ENCODE measurements at regions of chr13 and their contacts with region 1.

Region 1: DNA sequence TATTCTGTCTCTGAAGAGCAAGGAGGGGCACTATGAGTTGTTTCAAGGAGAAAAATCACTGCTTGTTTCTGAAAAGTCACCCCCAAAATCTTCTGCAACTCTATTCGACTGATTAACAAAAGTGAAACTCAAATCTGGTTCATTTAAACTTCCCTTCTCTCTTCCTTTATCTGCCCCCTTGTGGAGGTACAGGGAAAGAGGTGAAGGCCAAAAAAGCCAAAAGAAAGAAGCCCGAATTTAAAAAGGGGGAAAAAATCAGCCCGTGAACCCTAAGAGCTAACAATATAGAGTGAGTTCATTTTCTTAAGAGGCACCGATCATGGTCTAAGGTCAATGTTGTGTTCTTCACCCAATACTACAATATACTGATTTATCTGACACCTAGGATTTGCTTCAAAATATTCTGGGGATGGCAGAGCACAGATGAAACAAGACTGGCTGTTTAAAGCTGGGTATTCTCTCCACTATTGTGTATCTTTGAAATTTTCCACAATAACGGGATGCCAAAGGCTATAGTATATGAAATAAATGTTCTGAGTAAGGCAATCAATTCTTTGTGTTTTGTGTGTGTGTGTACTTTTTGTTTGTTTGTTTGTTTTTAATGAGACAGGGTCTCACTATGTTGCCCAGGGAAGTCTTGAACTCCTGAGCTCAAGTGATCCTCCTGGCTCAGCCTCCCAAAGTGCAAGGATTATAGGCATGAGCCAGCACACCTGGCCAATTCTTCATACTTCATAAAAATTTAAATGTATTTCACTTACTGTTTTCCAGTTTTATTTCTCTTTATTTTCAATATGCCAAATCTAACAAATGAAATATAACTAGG is 55.0 kb upstream of the EEF1AKMT1 start:
- DNase-seq: peak; percentile 64 to 81 (median 79)
- H3K4me3 ChIP-seq: peak overlapping the region in 2 of 7 experiments; percentile 56
- H3K27ac ChIP-seq: no peak overlapping the region
- H3K4me1 ChIP-seq: peaks cover 0 to 5% (median 0%) of the 10 kb centered on the region in 4 experiments
- H3K27me3 ChIP-seq: no peaks in the 10 kb centered on the region

Region 2: DNA sequence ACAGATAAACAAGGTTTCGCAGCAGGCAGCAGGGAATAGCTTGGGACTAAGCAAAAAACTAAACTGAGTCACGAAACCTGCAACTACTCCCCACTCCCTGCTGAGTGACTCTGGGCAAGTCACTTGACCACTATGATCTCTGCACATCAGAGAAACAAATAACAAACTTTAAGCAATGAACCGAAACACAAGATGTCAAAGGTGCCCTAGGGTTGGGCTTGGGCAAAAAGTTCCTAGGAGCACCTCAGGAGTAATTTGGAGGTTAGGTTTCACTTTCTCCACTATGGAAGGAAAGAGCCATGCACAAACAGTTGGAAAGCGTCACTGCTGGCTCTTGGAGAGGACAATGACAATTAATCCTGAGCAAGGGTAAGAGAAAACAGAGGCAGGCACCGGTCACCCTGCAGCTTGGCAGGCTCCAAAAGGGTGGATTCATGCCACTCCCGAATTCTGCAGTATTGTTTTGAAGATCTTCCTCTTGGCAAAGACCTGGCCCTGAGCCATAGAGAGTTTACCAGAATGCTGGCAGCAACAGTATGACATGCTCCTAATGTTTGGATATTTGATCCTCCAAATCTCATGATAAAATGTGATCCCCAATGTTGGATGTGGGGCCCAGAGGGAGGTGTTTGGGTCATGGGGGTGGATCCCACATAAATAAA is 363.4 kb before region 1 on chr13:
- CTCF ChIA-PET with region 1: no interaction called
- POLR2A ChIA-PET with region 1: no interaction called
- DNase-seq: no peak
- H3K4me3 ChIP-seq: no peak overlapping the region
- H3K27ac ChIP-seq: no peak overlapping the region
- H3K4me1 ChIP-seq: peaks cover 0 to 18% (median 10%) of the 10 kb centered on the region in 4 experiments
- H3K27me3 ChIP-seq: no peaks in the 10 kb centered on the region

Region 3: DNA sequence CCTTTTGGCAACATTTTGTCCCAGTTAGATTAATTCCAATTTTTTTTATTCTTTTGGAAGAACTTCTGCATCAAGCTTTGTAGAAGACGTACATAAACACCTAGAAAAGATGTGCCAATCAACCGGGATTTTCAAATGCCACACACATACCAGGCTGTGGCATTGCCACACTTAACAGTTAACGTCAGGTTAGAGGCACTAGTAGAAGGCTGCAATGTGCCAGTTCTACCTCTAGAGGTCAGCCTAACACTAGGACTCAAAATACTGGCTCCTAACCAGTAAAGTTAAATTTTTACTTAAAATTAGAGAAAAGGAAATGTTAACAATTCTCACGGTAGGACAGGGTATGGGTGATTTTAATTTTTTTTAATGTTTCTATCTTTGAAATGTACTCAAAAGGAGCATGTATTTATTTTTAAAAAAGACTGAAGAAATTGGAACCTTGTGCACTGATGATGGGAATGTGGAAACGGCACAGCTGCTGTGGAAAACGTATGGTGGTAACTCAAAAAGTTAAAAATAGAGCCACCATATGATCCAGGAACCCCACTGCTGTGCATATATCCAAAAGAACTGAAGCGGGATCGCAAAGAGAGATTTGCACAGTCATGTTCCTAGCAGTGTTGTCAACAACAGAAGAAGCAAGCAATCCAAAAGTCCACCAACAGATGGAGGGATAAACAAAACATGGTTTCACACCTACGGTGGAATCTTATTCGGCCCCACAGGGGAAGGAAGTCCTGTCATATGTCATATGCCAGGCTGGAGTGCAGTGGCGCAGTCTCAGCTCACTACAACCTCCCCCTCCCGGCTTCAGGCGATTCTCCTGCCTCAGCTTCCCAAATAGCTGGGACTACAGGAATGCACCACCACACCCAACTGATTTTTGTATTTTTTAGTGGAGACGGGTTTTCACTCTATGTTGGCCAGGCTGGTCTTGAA is 333.4 kb before region 1 on chr13:
- CTCF ChIA-PET with region 1: interaction called, 108 read pairs
- POLR2A ChIA-PET with region 1: no interaction called
- DNase-seq: peak; percentile 81 to 92 (median 90)
- H3K4me3 ChIP-seq: peak overlapping the region in 5 of 7 experiments; percentile 29 to 65 (median 59)
- H3K27ac ChIP-seq: peak overlapping the region; percentile 72 to 87
- H3K4me1 ChIP-seq: peaks cover 0 to 21% (median 16%) of the 10 kb centered on the region in 4 experiments
- H3K27me3 ChIP-seq: no peaks in the 10 kb centered on the region

Region 4: GRCh38 chr13:20713751-20714150 is 115.0 kb before region 1 on chr13:
- CTCF ChIA-PET with region 1: interaction called, 11 read pairs
- POLR2A ChIA-PET with region 1: interaction called, 3 read pairs
- DNase-seq: peak in 2 of 3 donors; percentile 41 to 50
- H3K4me3 ChIP-seq: no peak overlapping the region
- H3K27ac ChIP-seq: no peak overlapping the region
- H3K4me1 ChIP-seq: peaks cover 0 to 13% (median 3%) of the 10 kb centered on the region in 4 experiments
- H3K27me3 ChIP-seq: no peaks in the 10 kb centered on the region

Region 5: DNA sequence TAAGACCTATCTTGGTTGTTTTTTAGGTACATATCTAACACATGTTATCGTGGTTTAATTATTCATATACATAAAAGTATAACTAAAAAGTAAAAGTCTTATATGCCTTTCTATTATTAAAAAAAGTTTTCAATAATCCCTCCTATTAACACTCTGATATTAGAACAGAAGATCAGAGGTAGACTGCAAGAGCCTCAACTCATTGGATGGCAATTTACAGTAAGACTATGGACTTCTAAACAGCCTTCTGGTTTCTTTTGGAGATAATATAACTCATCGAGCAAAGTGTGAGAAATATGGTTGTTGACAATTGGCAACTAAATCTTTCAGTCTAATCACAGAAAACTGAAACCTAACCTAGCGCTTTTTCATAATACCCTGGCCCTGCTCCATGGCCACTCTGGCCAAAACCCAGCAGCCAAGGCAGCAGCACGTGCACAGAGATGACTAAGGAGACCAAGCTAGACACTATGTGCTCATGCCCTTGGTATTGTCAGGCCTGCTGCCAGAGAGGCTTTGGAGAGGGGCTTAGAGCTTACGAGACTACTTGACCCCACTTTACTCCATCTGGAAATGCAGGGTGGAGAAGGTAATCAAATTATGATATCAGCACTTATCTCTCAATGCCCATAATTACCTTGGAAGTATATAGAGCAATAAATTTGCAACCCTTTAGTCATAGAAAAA is 14.4 kb before region 1 on chr13:
- CTCF ChIA-PET with region 1: interaction called, 52 read pairs
- POLR2A ChIA-PET with region 1: no interaction called
- DNase-seq: no peak
- H3K4me3 ChIP-seq: no peak overlapping the region
- H3K27ac ChIP-seq: no peak overlapping the region
- H3K4me1 ChIP-seq: no peaks in the 10 kb centered on the region
- H3K27me3 ChIP-seq: no peaks in the 10 kb centered on the region

Region 6: DNA sequence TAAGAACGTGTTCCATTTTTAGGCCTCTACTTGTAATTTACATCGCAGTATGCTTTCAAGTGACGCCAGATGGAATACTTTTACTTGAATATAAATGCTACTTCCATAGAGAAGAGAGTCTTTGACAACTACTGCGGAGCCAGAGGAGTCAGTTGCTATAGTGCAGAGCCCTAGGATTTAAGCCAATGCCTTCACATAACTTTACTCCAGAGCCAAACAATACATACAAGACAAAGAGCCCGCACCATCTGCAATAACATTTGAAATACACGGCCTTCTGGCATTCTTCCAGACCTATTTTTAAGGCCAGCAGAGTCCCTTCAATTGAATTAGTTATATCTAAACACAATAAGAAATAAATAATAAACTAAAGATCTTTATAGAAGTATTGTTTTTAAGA is 14.4 kb after region 1 on chr13:
- CTCF ChIA-PET with region 1: interaction called, 19 read pairs
- POLR2A ChIA-PET with region 1: no interaction called
- DNase-seq: no peak
- H3K4me3 ChIP-seq: no peak overlapping the region
- H3K27ac ChIP-seq: no peak overlapping the region
- H3K4me1 ChIP-seq: no peaks in the 10 kb centered on the region
- H3K27me3 ChIP-seq: no peaks in the 10 kb centered on the region

Measured in common myeloid progenitor, CD34-positive (primary cell).